Activated CD8-positive, alpha-beta T cell treated with anti-CD3 and anti-CD28 coated beads, Interleukin-2, amount 10 ng/mL, durations not matched to agents 7 days and 5 days (primary cell): ENCODE measurements at regions of chr19 and their contacts with region 1.

Region 1: DNA sequence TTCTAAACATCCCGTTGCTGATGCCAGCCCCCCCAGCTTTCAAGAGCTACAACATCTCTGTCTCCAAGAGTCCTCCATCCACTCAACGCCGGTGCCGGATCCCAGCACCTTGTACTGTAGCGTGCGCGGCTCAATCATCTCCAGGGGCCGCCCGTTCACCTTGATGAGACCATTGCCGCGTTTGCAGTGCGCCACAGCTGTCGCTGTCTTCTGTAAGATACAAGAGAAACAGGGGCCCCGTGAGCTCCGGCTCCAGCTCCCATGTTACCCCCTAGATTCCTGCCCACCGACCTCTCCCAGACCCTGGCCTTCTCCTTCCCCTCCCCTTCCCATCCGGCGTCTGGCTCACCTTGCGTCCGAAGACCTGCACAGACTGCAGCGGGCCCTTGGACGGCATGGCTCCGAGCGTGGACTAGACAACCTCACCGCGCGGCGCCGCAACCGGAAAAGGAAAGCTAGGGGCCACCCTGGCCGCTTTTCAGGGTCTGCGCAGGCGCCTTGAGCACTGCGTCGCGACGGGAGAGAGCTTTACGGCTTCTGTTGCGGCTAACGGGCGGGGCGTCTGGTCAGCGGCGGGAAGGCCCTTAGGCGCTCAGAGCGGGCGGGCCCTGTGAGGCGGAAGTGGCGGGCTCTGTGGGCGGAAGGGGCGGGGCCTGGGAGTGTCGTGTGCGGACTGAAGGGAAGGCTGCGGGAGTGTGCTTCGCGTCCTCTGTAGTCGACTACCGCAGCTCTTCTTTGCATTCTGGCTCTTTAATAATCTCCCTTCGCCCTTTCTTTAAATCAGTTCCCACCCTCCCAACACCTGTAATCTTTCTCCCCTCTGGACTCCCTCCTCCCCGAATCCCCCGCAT is at the start of gene RPS16:
- DNase-seq: peak; percentile 99
- ATAC-seq: peak; percentile 94
- H3K4me3 Mint-ChIP-seq: peak within 1 kb of the TSS; percentile 99
- H3K27ac Mint-ChIP-seq: peak within 1 kb of the TSS; percentile 100
- H3K4me1 Mint-ChIP-seq: peaks cover 54% of the 10 kb centered on the region
- H3K27me3 Mint-ChIP-seq: peaks cover 4% of the 10 kb centered on the region
- total RNA-seq, gene RPS16: 2,100 to 2,157 TPM

Region 2: DNA sequence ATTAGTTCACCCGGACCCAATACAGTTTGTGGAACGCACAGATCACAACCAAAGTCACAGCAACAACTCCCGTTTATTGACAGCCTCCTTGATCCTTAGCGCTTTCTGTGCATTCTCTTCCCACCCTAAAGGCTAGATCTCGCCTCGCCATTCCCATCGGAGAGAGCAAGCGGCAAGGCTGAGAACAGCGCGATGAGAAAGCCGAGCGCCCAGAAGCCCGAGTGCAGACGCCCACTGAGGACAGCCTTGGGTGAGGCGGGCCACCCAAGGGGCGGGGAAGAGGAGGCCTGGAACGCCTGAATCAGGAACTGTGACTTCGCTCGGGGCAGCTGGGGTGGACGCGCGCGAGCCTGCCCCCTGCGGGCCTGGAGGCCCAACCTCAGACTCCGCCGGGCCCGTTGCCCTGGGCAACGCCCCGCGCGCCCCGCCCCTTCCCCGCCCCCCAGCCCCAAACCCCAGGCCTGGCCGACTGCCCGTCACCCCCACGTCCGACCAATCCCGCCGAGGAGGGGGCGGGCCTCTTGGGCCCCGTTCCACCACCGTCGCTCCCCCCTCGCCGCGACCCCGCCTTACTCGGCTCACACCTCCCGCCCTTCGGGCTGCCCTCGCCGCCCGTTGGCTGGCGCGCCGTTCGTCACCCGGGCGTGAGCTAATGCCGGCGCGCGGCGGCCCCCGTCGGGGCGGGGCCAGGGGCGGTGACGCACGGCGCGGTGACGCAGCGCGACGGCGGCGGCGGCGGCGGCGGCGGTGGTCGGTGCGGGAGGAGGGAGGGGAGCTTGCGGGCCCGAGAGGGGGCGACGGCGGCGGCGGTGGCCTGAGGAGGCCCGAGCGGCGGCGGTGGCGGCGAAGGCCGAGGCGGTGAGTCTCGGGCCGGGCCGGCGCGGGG is 93.8 kb before region 1 on chr19 and contains the start of gene SAMD4B:
- CTCF ChIA-PET with region 1: no interaction called
- POLR2A ChIA-PET with region 1: interaction called, 10 read pairs
- DNase-seq: peak; percentile 99
- ATAC-seq: peak; percentile 92
- H3K4me3 Mint-ChIP-seq: peak within 1 kb of the TSS; percentile 90
- H3K27ac Mint-ChIP-seq: peak within 1 kb of the TSS; percentile 91
- H3K4me1 Mint-ChIP-seq: peaks cover 66% of the 10 kb centered on the region
- H3K27me3 Mint-ChIP-seq: no peaks in the 10 kb centered on the region
- total RNA-seq, gene SAMD4B: 43.7 to 44.5 TPM

Region 3: DNA sequence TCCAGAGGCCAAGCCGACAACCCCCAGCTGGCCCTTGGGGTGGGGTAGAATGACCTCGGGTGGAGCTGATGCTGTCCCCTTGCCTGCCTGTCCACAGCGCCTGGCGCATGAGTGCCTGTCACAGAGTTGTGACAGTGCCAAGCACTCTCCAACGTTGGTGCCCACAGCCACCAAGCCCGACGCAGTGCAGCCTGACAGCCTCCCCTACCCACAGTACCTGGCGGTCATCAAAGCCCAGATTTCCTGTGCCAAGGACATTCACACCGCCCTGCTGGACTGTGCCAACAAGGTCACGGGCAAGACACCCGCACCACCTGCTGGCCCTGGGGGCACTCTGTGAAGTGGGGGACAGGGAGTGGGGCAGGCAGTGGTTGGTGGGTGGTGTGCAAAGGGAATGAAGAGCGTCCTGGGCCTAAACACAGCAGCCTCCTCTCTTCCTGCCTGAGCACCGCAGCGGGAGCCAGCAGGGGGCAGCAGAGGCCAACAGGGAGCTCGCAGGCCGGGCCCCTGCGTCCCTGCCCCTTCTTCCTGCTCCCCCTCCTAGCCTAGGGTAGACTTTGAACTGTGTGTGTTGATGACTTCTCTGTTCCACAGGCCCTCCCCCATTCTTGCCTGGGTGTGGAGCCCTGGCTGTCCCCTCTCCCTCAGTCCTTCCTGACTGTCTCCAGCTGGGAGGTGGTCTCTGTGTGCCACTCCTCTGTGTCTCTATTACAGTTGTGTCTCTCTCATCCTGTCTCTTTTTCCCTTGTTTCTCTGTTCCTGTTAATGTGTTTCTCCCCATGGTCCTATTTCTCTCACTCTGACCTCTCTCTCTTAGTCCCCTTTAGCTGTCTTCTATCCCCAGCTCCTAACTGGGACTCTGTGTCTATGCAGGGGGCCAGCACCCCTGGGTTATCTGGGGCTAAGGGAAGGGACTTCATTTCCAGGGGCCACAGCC is 38.1 kb before region 1 on chr19:
- CTCF ChIA-PET with region 1: interaction called, 5 read pairs
- POLR2A ChIA-PET with region 1: interaction called, 18 read pairs
- DNase-seq: peak; percentile 95
- ATAC-seq: peak; percentile 70
- H3K4me3 Mint-ChIP-seq: peak overlapping the region; percentile 2
- H3K27ac Mint-ChIP-seq: peak overlapping the region; percentile 82
- H3K4me1 Mint-ChIP-seq: peaks cover 70% of the 10 kb centered on the region
- H3K27me3 Mint-ChIP-seq: no peaks in the 10 kb centered on the region

Region 4: GRCh38 chr19:39412100-39412866 is 23.4 kb before region 1 on chr19 and contains the start of gene PLEKHG2:
- CTCF ChIA-PET with region 1: interaction called, 33 read pairs
- POLR2A ChIA-PET with region 1: interaction called, 58 read pairs
- DNase-seq: peak; percentile 98
- ATAC-seq: peak; percentile 63
- H3K4me3 Mint-ChIP-seq: peak within 1 kb of the TSS; percentile 97
- H3K27ac Mint-ChIP-seq: peak within 1 kb of the TSS; percentile 89
- H3K4me1 Mint-ChIP-seq: peaks cover 37% of the 10 kb centered on the region
- H3K27me3 Mint-ChIP-seq: no peaks in the 10 kb centered on the region
- total RNA-seq, gene PLEKHG2: 64.4 to 68.5 TPM

Region 5: DNA sequence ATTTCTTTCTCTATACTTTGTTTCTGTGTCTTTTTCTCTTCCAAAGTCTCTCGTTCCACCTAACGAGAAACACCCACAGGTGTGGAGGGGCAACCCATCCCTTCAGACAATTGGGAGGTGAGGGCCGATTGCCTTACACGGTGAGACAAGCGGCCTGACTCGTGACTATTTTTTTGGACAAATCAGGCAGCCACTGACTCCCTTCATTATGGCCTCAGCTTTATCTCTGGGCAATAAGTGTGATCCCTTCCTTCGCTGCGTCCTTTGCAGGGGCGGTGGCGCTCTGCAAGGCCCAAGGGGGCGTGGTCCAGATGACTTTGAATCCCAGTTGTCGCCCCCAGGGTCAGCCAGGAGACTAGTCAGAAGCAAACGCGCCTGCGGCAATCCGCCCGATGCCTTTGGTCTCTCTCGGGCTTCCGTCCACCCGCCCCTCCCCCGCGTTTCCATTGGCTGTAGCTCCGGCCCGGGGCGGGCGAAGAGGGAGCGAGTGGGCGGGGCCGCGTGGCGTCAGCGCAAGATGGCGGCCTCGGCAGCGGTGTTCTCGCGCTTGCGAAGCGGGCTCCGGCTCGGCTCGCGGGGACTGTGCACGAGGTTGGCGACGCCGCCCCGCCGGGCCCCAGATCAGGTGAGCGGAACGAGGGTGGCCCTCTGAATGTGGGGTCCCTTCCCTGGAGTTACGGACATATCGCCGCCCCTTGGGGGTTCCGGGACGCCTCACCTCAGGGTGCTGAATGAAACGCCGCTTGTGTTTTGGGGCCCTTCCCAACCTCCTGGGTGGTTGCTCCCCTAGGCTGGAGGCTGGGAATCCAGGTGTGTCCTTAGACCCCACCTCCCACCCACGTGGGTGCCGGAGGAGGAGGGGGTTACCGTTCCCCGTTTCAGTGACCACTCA is 44.9 kb after region 1 on chr19 and contains the start of gene TIMM50:
- CTCF ChIA-PET with region 1: interaction called, 3 read pairs
- POLR2A ChIA-PET with region 1: interaction called, 11 read pairs
- DNase-seq: peak; percentile 98
- ATAC-seq: peak; percentile 96
- H3K4me3 Mint-ChIP-seq: peak within 1 kb of the TSS; percentile 92
- H3K27ac Mint-ChIP-seq: peak within 1 kb of the TSS; percentile 97
- H3K4me1 Mint-ChIP-seq: peaks cover 29% of the 10 kb centered on the region
- H3K27me3 Mint-ChIP-seq: no peaks in the 10 kb centered on the region
- total RNA-seq, gene TIMM50: 56.1 to 65.9 TPM

Region 6: GRCh38 chr19:39539519-39540332 is 104.0 kb after region 1 on chr19 and contains the start of gene EID2:
- CTCF ChIA-PET with region 1: interaction called, 18 read pairs
- POLR2A ChIA-PET with region 1: interaction called, 14 read pairs
- DNase-seq: peak; percentile 97
- ATAC-seq: peak; percentile 91
- H3K4me3 Mint-ChIP-seq: peak within 1 kb of the TSS; percentile 95
- H3K27ac Mint-ChIP-seq: peak within 1 kb of the TSS; percentile 94
- H3K4me1 Mint-ChIP-seq: peaks cover 58% of the 10 kb centered on the region
- H3K27me3 Mint-ChIP-seq: no peaks in the 10 kb centered on the region
- total RNA-seq, gene EID2: 18.9 to 19.9 TPM